AG04450 (cell line): ENCODE measurements at regions of chr17 and their contacts with region 1.

Region 1: DNA sequence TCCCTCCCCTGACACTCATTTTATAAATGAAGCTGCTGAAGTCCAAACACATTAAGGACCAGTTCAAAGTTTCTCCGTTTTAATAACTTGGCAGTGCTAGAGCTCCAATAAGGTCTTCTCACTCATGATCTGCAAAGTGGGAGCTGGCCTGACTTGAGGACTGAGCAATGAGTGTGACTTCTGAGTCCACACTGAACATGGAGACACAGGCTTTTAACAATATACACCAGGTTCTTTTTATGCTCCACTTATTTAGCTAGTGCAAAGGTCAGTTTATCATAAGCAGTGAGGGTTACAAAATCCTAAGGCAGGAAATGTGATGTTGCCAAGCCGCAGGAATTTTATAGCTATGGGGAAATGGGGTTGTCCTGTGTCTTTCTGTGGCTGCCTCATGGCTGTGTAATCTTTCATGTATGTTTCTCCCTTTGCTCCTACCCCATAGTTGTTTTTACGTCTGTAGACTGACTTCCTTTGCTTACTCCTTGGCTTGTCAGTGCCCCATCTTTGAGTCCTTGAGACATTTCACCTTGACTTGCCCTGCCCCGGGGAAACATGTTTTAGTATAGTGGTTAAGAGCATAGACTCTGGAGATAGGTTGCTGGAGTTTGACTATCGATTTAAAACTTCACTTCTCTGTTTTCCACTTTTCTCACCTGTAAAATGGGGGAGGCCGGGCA is 12.1 kb upstream of the MMD start:
- DNase-seq: peak; percentile 89
- H3K4me3 ChIP-seq: no peak overlapping the region
- H3K27ac ChIP-seq: peak overlapping the region; percentile 95
- H3K27me3 ChIP-seq: no peaks in the 10 kb centered on the region
- CTCF ChIP-seq: no peak

Region 2: GRCh38 chr17:55398689-55399088 is 35.1 kb before region 1 on chr17:
- CTCF ChIA-PET with region 1: no interaction called
- POLR2A ChIA-PET with region 1: no interaction called
- DNase-seq: no peak
- H3K4me3 ChIP-seq: no peak overlapping the region
- H3K27ac ChIP-seq: no peak overlapping the region
- H3K27me3 ChIP-seq: no peaks in the 10 kb centered on the region
- CTCF ChIP-seq: no peak

Region 3: DNA sequence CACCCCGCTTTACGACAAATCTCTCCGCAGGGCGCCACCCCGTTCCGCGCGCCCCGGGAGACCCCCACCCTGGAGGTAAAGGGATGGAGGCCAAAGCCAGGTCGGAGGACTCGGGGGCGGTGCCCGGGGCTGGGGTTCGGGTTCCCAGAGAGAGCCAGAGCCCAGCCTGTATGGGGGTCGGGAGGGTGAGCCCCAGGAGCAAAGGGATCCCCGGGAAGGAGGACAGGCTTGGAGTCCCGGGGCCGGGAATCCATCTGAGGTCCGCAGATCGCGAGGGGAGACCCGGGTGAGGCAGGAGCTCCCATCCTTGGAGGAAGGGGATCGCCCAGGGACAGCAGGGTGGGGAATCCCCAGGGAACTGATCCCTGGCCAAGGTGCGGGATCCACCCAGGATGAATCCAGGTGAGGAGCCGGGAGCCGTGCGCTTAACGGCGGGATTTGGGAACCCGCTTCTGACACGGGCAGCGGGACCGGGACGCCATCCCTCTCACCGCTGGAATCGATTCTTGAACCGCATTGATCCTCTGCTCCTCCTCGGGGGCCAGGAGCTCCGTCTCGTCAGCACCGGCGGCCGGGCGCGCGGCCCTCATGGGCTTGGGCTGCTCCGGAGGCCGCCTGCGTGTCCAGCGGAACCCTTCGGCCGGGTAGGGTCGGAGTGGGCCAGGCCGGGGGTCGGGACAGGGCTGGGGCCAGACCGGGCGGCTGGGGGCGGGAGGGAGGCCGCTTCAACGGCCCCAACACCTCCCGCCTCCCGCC is 12.4 kb before region 1 on chr17 and contains the start of gene MMD:
- CTCF ChIA-PET with region 1: interaction called, 6 read pairs
- POLR2A ChIA-PET with region 1: interaction called, 10 read pairs
- DNase-seq: no peak
- H3K4me3 ChIP-seq: peak within 1 kb of the TSS; percentile 92
- H3K27ac ChIP-seq: peak within 1 kb of the TSS; percentile 24
- H3K27me3 ChIP-seq: no peaks in the 10 kb centered on the region
- CTCF ChIP-seq: no peak
- polyA plus RNA-seq, gene MMD: 33.0 and 41.6 TPM in 2 replicates

Region 4: GRCh38 chr17:55452139-55452790 is 18.5 kb after region 1 on chr17:
- CTCF ChIA-PET with region 1: interaction called, 3 read pairs
- POLR2A ChIA-PET with region 1: interaction called, 36 read pairs
- DNase-seq: peak; percentile 66
- H3K4me3 ChIP-seq: no peak overlapping the region
- H3K27ac ChIP-seq: peak overlapping the region; percentile 79
- H3K27me3 ChIP-seq: no peaks in the 10 kb centered on the region
- CTCF ChIP-seq: no peak

Region 5: GRCh38 chr17:55625521-55625920 is 191.8 kb after region 1 on chr17:
- CTCF ChIA-PET with region 1: no interaction called
- POLR2A ChIA-PET with region 1: no interaction called
- DNase-seq: no peak
- H3K4me3 ChIP-seq: no peak overlapping the region
- H3K27ac ChIP-seq: no peak overlapping the region
- H3K27me3 ChIP-seq: peaks cover 3% of the 10 kb centered on the region
- CTCF ChIP-seq: no peak